Dendritic cell treated with granulocyte-macrophage colony-stimulating factor and Interleukin-4, amounts not matched to agents 40 ng/mL and 50 ng/mL, for 4 days (primary cell): ENCODE measurements at regions of chr11 and their contacts with region 1.

Region 1: DNA sequence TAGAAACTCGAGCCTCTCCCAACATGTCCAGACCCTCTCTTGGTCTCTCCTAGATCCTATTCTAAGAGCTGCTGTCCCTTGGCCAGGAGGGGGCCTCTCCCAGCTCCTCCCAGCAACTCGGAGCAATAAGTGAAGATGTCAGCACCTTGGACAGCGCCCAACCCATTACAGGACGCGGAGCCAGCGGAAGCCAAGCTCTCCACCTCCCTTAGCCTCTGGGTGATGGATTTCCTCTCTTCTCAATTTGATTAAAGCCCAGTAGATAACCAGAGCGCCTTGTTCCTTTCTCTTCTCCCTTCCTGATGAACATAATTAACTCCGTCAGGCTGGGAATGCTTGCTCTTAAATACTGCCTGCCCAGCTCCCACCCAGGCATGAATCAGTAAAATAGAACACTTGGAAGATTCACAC is 26.2 kb upstream of the TPBGL start:
- H3K4me3 Mint-ChIP-seq: no peak overlapping the region
- H3K27ac Mint-ChIP-seq: no peak overlapping the region
- H3K4me1 Mint-ChIP-seq: no peaks in the 10 kb centered on the region
- H3K27me3 Mint-ChIP-seq: peaks cover 33% of the 10 kb centered on the region

Region 2: DNA sequence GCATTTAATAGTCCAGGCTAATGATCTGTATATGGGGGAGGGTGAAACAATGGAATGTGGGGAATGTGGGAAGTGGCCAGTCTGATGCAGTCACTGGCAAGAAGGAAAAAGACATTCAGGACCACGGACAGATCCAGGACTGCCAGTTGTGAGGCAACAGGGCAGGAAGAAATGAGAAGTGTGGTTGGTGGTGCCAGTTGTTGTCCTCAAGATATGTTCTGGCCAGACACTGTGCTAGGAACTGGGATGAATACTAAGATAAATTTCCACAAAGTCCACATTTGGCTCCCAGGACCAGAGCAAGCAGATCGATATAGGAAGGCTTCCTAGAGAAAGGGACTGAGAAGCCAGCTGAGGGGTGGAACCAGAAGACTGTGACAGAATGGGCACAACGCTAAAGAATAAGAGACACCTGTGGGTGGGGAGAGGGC is 19.3 kb after region 1 on chr11:
- intact Hi-C with region 1: loop called (anchors 1 kb)
- H3K4me3 Mint-ChIP-seq: no peak overlapping the region
- H3K27ac Mint-ChIP-seq: no peak overlapping the region
- H3K4me1 Mint-ChIP-seq: no peaks in the 10 kb centered on the region
- H3K27me3 Mint-ChIP-seq: peaks cover 51% of the 10 kb centered on the region

Region 3: GRCh38 chr11:75254326-75254725 is 39.9 kb after region 1 on chr11:
- intact Hi-C with region 1: no loop called
- H3K4me3 Mint-ChIP-seq: no peak overlapping the region
- H3K27ac Mint-ChIP-seq: no peak overlapping the region
- H3K4me1 Mint-ChIP-seq: no peaks in the 10 kb centered on the region
- H3K27me3 Mint-ChIP-seq: peaks cover 43% of the 10 kb centered on the region